Sigmoid colon (tissue), 7 donors: ENCODE measurements at regions of chr14 and their contacts with region 1.

Region 1: DNA sequence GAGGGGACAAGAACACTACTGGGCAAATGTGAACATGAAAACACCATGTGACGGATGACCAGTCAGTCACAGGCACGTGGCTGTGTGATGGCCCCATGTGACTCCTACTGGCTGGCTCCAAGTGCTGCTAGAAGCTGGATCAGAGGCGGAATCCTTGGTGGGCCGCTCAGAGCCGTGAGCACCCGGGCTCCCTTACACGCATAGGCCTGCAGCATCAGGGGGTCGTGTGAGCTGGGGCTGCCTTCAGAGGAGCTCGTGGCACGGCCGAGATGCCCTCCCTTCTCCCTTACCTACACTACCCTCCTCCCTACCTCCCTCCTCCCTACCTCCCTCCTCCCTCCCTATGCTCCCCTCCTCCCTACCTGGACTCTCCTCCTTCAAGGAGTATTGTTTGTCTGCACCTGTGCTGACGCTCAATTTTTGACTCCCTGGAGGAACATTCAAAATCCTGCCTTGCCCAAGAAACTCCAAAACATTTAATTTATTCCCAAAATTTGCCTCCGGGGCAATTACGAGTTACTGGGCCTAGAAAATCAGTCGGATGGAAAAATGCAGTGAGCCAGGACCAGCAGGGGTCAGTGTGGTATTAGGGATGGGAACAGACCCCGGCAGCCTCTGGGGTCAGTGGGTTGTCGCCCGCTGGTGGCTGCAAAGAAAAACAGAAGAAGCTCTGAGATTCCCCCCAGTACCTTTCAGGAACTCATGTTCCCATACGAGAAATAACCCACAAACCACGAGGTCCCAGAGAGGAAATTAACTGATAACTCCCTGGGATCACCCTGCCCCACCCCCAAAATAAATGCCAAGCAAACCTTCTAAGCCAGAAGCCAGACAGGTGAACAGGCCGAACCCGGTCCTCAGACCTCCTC is 61.2 kb downstream of the C14orf132 start:
- DNase-seq: peak; percentile 87
- H3K4me3 ChIP-seq: no peak overlapping the region
- H3K27ac ChIP-seq: peak overlapping the region in 1 of 4 donors; percentile 36
- H3K4me1 ChIP-seq: peaks cover 0 to 29% (median 25%) of the 10 kb centered on the region in 4 donors
- H3K27me3 ChIP-seq: no peaks in the 10 kb centered on the region
- CTCF ChIP-seq: peak; percentile 87 to 94 (median 88)
- EP300 ChIP-seq: no peak
- POLR2A ChIP-seq: no peak

Region 2: GRCh38 chr14:95534299-95535225 is 565.8 kb before region 1 on chr14 and contains the start of gene GLRX5:
- intact Hi-C with region 1: no loop called
- DNase-seq: peak; percentile 100
- H3K4me3 ChIP-seq: peak within 1 kb of the TSS; percentile 85 to 100 (median 94)
- H3K27ac ChIP-seq: peak within 1 kb of the TSS; percentile 82 to 91 (median 87)
- H3K4me1 ChIP-seq: peaks cover 0 to 58% (median 50%) of the 10 kb centered on the region in 4 donors
- H3K27me3 ChIP-seq: no peaks in the 10 kb centered on the region
- CTCF ChIP-seq: no peak
- EP300 ChIP-seq: no peak
- POLR2A ChIP-seq: no peak
- total RNA-seq, gene GLRX5: 30.5 to 61.4 (median 44.3) TPM

Region 3: GRCh38 chr14:95993768-95994592 is 106.4 kb before region 1 on chr14:
- intact Hi-C with region 1: loop called (anchors 2 kb)
- DNase-seq: no peak
- H3K4me3 ChIP-seq: no peak overlapping the region
- H3K27ac ChIP-seq: no peak overlapping the region
- H3K4me1 ChIP-seq: no peaks in the 10 kb centered on the region
- H3K27me3 ChIP-seq: peaks cover 0 to 11% (median 5%) of the 10 kb centered on the region in 3 donors
- CTCF ChIP-seq: peak; percentile 37 to 86 (median 73)
- EP300 ChIP-seq: no peak
- POLR2A ChIP-seq: no peak

Region 4: DNA sequence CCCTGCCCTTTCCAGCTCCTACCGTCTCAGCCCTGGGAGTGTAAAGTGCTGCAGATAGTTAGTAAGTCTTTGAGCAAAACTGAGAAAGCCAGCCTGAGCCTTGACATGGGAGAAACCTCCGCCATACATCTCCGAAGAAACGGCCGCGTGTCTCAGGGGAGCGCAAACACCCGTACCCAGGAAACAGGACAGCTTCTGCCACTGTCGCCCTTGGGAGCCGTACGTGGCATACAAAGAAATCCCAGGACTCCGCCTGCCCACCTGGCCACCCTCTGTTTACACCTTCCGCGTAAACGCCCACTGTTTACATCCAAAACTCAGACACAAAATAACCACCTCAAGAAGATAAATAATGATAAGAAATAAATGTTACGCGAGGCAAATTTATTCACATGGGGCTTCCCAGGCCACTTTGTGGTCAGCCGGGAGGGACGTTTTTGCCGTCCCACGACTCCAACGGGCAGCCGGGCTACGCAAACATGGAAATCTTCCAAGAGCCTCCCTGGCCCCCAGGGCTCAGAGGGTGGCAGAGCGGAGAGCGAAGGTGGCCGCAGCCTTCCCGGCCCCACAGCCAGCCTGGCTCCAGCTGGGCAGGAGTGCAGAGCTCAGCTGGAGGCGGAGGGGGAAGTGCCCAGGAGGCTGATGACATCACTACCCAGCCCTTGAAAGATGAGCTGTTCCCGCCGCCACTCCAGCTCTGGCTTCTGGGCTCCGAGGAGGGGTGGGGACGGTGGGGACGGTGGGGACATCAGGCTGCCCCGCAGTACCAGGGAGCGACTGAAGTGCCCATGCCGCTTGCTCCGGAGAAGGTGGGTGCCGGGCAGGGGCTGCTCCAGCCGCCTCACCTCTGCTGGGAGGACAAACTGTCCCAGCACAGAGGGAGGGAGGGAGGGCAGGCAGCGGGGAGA is 104.0 kb after region 1 on chr14 and contains the start of gene BDKRB2:
- intact Hi-C with region 1: loop called (anchors 1 kb)
- DNase-seq: peak; percentile 91
- H3K4me3 ChIP-seq: peak within 1 kb of the TSS; percentile 36 to 59 (median 50)
- H3K27ac ChIP-seq: peak within 1 kb of the TSS; percentile 77 to 84 (median 83)
- H3K4me1 ChIP-seq: peaks cover 0 to 34% (median 30%) of the 10 kb centered on the region in 4 donors
- H3K27me3 ChIP-seq: no peaks in the 10 kb centered on the region
- CTCF ChIP-seq: no peak
- EP300 ChIP-seq: peak in 1 of 4 donors; percentile 43
- POLR2A ChIP-seq: peak; percentile 87 to 90
- total RNA-seq, gene BDKRB2: 1.8 to 4.5 (median 3.9) TPM

Region 5: DNA sequence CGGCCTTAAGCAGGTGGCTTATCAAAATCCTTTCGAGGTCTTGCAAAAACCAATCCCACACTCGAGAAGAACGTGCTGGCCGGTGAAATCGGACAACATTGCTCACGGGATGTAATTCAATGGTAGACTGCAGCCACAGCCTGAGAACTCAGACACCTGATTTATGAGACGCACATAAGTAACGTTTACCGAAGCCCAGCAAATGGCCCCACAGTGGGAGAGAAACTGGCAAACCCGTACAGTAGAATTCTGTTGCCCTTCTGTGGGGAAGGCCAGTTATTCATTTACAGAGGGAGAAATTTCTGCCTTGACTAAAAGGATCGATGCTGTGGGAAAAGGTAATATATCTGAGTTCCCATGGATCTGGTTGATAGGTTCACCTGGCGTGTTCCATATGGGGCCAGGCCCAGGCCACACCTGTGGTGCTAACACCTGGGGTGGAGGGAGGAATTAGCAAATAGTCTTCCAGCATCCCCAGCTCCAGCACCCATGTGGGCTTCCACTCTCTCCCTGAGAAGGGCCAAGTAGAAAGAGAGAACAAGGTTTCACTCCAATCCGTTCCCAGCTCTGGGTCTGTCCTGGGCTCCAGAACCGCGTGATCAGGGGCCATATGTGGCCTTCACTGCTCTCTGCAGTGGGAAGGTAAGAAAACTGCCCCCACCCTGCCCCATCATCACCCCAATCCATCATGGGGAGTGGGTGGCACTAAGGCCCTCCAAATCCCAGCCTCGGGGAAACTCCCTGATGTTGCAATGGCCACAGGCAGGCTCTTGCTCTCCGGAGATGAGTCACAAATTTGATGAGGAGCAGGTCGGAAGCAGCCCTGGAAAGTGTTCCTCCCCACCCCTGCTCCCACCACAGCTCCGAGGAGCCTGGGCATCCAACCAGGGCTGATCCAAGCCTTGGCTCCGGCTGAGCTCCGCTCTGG is 168.3 kb after region 1 on chr14:
- intact Hi-C with region 1: loop called (anchors 1 kb)
- DNase-seq: peak; percentile 92
- H3K4me3 ChIP-seq: no peak overlapping the region
- H3K27ac ChIP-seq: peak overlapping the region; percentile 64 to 83 (median 76)
- H3K4me1 ChIP-seq: peaks cover 0 to 52% (median 32%) of the 10 kb centered on the region in 4 donors
- H3K27me3 ChIP-seq: no peaks in the 10 kb centered on the region
- CTCF ChIP-seq: no peak
- EP300 ChIP-seq: peak in 2 of 4 donors; percentile 75 to 79
- POLR2A ChIP-seq: no peak

Region 6: GRCh38 chr14:96424109-96424989 is 324.0 kb after region 1 on chr14:
- intact Hi-C with region 1: loop called (anchors 1 kb)
- DNase-seq: no peak
- H3K4me3 ChIP-seq: peak overlapping the region in 3 of 4 donors; percentile 35 to 46 (median 44)
- H3K27ac ChIP-seq: no peak overlapping the region
- H3K4me1 ChIP-seq: peaks cover 0 to 9% (median 7%) of the 10 kb centered on the region in 4 donors
- H3K27me3 ChIP-seq: peaks cover 0 to 7% (median 0%) of the 10 kb centered on the region in 3 donors
- CTCF ChIP-seq: peak; percentile 48 to 82 (median 78)
- EP300 ChIP-seq: no peak
- POLR2A ChIP-seq: no peak

Region 7: DNA sequence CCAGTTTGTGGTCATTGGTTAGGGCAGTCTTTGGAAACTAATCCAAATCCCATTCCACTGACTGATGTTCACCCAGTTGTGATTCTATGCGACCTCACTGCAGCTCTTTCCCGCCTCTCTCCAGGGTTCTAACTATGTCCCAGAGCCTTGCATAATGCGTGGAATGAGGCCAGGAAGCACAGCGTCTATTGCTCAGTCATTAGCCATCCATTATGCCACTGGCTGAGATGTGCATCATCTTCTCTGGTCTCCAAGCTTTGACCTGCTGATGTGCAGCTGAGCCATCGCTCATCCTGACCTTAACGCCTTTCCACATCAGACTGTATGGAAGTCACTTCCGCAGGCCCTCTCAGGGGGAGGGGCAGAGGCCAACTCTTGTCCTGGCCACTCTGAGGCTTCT is 581.4 kb after region 1 on chr14:
- intact Hi-C with region 1: no loop called
- DNase-seq: no peak
- H3K4me3 ChIP-seq: no peak overlapping the region
- H3K27ac ChIP-seq: no peak overlapping the region
- H3K4me1 ChIP-seq: no peaks in the 10 kb centered on the region
- H3K27me3 ChIP-seq: no peaks in the 10 kb centered on the region
- CTCF ChIP-seq: no peak
- EP300 ChIP-seq: no peak
- POLR2A ChIP-seq: no peak